ENCODE measurements at regions of chr6 and their contacts with region 1.

Region 1: GRCh38 chr6:7939184-7939863 is 28.7 kb upstream of the TXNDC5 start:
- DNase-seq: no peak
- ATAC-seq: no peak
- H3K4me3 ChIP-seq: no peak overlapping the region
- H3K27ac ChIP-seq: no peak overlapping the region
- H3K4me1 ChIP-seq: no peaks in the 10 kb centered on the region
- H3K27me3 ChIP-seq: no peaks in the 10 kb centered on the region
- CTCF ChIP-seq: no peak

Region 2: GRCh38 chr6:7813704-7814103 is 125.6 kb before region 1 on chr6:
- CTCF ChIA-PET with region 1: no interaction called
- POLR2A ChIA-PET with region 1: interaction called, 15 read pairs
- in situ Hi-C with region 1: no loop called
- intact Hi-C with region 1: no loop called
- DNase-seq: no peak
- ATAC-seq: 0 out of 2 replicates have a peak, but pooled peaks have one; percentile 51
- H3K4me3 ChIP-seq: no peak overlapping the region
- H3K27ac ChIP-seq: no peak overlapping the region
- H3K4me1 ChIP-seq: no peaks in the 10 kb centered on the region
- H3K27me3 ChIP-seq: no peaks in the 10 kb centered on the region
- CTCF ChIP-seq: no peak